Activated T-helper 2 cell treated with anti-CD3 and anti-CD28 coated beads, Interferon-gamma antibody, Interleukin-2, Interleukin-4, amounts not matched to agents 10 μg/mL and 5 μg/mL and 100 μg/mL, durations not matched to agents 14 hours and 24 hours and 36 hours (primary cell): ENCODE measurements at regions of chr15 and their contacts with region 1.

Region 1: DNA sequence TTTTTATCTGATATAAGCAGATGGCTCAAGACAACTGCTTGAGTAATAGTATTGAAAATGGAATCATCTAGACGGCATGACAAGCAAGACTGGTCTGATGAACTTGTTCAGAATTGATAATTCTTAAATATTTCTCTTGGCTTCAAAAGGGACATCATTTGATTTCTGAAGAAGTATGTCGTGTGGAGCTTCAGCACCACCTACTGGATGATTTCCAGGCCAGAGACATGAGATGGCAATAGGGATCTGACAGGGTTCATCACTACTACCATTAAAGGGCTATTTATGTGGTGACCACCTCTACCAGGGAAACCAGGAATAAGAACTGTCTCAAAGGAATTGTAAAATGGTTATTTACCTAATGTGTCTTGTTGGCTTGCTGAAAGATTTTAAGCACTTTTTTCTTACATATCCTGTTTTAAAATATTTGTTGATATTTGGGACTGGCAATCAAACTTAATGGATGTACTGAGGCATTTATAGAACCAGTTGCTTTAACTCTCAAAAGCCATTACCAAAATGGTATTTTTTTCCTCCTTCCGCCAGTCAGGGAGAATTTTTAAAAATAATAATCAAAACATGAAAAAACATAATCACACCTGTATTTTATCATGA is 99.5 kb upstream of the FAM98B start:
- DNase-seq: peak; percentile 19
- H3K4me3 Mint-ChIP-seq: no peak overlapping the region
- H3K27ac Mint-ChIP-seq: no peak overlapping the region
- H3K4me1 Mint-ChIP-seq: no peaks in the 10 kb centered on the region
- H3K27me3 Mint-ChIP-seq: peaks cover 4% of the 10 kb centered on the region

Region 2: GRCh38 chr15:38002883-38003477 is 351.4 kb before region 1 on chr15:
- intact Hi-C with region 1: loop called (anchors 10 kb)
- DNase-seq: no peak
- H3K4me3 Mint-ChIP-seq: no peak overlapping the region
- H3K27ac Mint-ChIP-seq: no peak overlapping the region
- H3K4me1 Mint-ChIP-seq: no peaks in the 10 kb centered on the region
- H3K27me3 Mint-ChIP-seq: peaks cover 2% of the 10 kb centered on the region